ENCODE measurements at regions of chrX and their contacts with region 1.

Region 1: GRCh38 chrX:21926527-21927278 is 13.8 kb upstream of the SMS start:
- DNase-seq: no peak
- H3K4me3 Mint-ChIP-seq: no peak overlapping the region
- H3K27ac Mint-ChIP-seq: peak overlapping the region; percentile 83
- H3K4me1 Mint-ChIP-seq: peaks cover 29% of the 10 kb centered on the region
- H3K27me3 Mint-ChIP-seq: no peaks in the 10 kb centered on the region

Region 2: GRCh38 chrX:20594985-20595384 is 1331.7 kb before region 1 on chrX:
- intact Hi-C with region 1: loop called (anchors 5 kb)
- DNase-seq: no peak
- H3K4me3 Mint-ChIP-seq: no peak overlapping the region
- H3K27ac Mint-ChIP-seq: no peak overlapping the region
- H3K4me1 Mint-ChIP-seq: peaks cover 24% of the 10 kb centered on the region
- H3K27me3 Mint-ChIP-seq: no peaks in the 10 kb centered on the region

Region 3: GRCh38 chrX:21698272-21698671 is 228.4 kb before region 1 on chrX:
- intact Hi-C with region 1: no loop called
- DNase-seq: no peak
- H3K4me3 Mint-ChIP-seq: no peak overlapping the region
- H3K27ac Mint-ChIP-seq: no peak overlapping the region
- H3K4me1 Mint-ChIP-seq: no peaks in the 10 kb centered on the region
- H3K27me3 Mint-ChIP-seq: no peaks in the 10 kb centered on the region

Region 4: DNA sequence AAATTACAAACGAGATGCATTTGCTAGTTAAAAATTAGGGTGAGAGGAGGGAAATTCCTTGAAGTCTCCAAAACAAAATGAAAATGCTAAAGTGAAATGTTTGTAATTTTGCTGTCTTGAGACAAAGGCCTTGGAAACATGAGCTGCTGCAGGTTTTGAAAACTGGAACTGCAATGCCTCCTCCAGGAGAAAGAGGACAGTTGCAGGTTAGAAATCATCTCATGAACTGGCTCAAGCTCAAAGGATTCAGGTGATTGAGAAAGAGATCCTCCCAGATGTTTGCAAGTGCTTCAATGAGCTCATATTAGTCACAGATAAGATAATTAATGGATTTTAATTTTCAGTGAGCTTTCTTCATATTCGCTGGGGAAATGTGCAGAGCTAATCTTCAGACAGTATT is 201.2 kb before region 1 on chrX:
- intact Hi-C with region 1: no loop called
- DNase-seq: no peak
- H3K4me3 Mint-ChIP-seq: no peak overlapping the region
- H3K27ac Mint-ChIP-seq: no peak overlapping the region
- H3K4me1 Mint-ChIP-seq: no peaks in the 10 kb centered on the region
- H3K27me3 Mint-ChIP-seq: peaks cover 2% of the 10 kb centered on the region

Region 5: GRCh38 chrX:21940356-21940829 is 13.7 kb after region 1 on chrX and contains the start of gene SMS:
- intact Hi-C with region 1: loop called (anchors 2 kb)
- DNase-seq: peak; percentile 24
- H3K4me3 Mint-ChIP-seq: peak within 1 kb of the TSS; percentile 87
- H3K27ac Mint-ChIP-seq: peak within 1 kb of the TSS; percentile 93
- H3K4me1 Mint-ChIP-seq: peaks cover 31% of the 10 kb centered on the region
- H3K27me3 Mint-ChIP-seq: no peaks in the 10 kb centered on the region
- total RNA-seq, gene SMS: 143 TPM in 2 replicates

Region 6: GRCh38 chrX:21972721-21973120 is 46.0 kb after region 1 on chrX:
- intact Hi-C with region 1: loop called (anchors 5 kb)
- DNase-seq: peak; percentile 13
- H3K4me3 Mint-ChIP-seq: no peak overlapping the region
- H3K27ac Mint-ChIP-seq: peak overlapping the region; percentile 82
- H3K4me1 Mint-ChIP-seq: peaks cover 35% of the 10 kb centered on the region
- H3K27me3 Mint-ChIP-seq: no peaks in the 10 kb centered on the region

Measured in activated T-helper 2 cell treated with anti-CD3 and anti-CD28 coated beads, Interferon-gamma antibody, Interleukin-2, Interleukin-4, amounts not matched to agents 10 μg/mL and 5 μg/mL and 100 μg/mL, durations not matched to agents 14 hours and 24 hours and 36 hours (primary cell).